Gastrocnemius medialis (tissue), 4 donors: ENCODE measurements at regions of chr9 and their contacts with region 1.

Region 1: DNA sequence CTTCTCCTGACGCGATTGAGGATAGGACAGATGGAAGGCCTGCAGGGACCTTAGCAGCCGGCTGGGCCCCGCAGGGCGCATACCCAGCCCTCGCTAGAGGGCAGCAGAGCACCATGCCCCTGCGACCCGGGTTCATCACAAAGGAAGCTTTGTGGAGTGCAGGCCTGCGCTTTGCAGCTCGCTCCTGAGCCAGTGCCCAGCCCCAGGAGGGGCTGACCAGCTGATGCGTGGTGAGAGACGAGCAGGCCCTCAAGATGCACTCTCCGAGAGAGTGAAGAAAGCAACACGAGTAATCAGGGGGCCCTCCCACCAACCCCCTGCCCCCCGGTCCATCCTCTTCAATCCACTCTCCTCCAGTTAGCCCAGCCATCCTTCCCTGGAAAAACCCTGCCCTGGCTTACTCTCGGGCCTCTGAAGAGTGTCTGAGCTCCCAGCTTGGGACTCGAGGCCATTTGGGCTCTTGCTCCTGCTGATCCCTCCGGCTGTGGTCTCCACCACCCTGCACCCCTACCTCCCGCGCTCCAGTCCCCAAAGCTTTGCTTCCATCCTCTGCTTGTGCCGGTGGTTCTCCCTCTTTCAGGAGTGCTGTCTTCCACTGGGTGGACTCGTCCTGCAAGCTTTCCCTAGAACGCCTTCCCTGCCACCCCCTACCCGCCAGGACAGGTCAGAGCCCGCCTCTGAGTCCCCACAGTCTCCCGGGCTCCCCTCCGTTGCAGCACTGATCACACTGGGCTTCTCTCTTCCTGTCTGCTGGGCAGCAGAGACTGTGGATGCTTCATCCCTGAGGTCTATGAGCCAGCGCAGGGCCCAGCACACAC is 9.1 kb upstream of the KIF12 start:
- DNase-seq: peak; percentile 42 to 48
- ATAC-seq: peak; percentile 85 to 89
- H3K4me3 ChIP-seq: no peak overlapping the region
- H3K27ac ChIP-seq: no peak overlapping the region
- H3K4me1 ChIP-seq: no peaks in the 10 kb centered on the region
- H3K27me3 ChIP-seq: no peaks in the 10 kb centered on the region
- CTCF ChIP-seq: peak; percentile 89 to 99 (median 94)
- POLR2A ChIP-seq: no peak

Region 2: GRCh38 chr9:113929634-113930389 is 178.4 kb before region 1 on chr9:
- in situ Hi-C with region 1: no loop called
- intact Hi-C with region 1: no loop called
- DNase-seq: no peak
- ATAC-seq: no peak
- H3K4me3 ChIP-seq: no peak overlapping the region
- H3K27ac ChIP-seq: no peak overlapping the region
- H3K4me1 ChIP-seq: peaks cover 0 to 7% of the 10 kb centered on the region in 2 donors
- H3K27me3 ChIP-seq: no peaks in the 10 kb centered on the region
- CTCF ChIP-seq: no peak
- POLR2A ChIP-seq: no peak

Region 3: GRCh38 chr9:114082017-114082762 is 26.0 kb before region 1 on chr9:
- in situ Hi-C with region 1: no loop called
- intact Hi-C with region 1: loop called (anchors 1 kb)
- DNase-seq: peak; percentile 62 to 79
- ATAC-seq: peak; percentile 95 to 98
- H3K4me3 ChIP-seq: no peak overlapping the region
- H3K27ac ChIP-seq: no peak overlapping the region
- H3K4me1 ChIP-seq: no peaks in the 10 kb centered on the region
- H3K27me3 ChIP-seq: peaks cover 0 to 6% (median 0%) of the 10 kb centered on the region in 3 donors
- CTCF ChIP-seq: peak; percentile 72 to 94 (median 89)
- POLR2A ChIP-seq: no peak

Region 4: DNA sequence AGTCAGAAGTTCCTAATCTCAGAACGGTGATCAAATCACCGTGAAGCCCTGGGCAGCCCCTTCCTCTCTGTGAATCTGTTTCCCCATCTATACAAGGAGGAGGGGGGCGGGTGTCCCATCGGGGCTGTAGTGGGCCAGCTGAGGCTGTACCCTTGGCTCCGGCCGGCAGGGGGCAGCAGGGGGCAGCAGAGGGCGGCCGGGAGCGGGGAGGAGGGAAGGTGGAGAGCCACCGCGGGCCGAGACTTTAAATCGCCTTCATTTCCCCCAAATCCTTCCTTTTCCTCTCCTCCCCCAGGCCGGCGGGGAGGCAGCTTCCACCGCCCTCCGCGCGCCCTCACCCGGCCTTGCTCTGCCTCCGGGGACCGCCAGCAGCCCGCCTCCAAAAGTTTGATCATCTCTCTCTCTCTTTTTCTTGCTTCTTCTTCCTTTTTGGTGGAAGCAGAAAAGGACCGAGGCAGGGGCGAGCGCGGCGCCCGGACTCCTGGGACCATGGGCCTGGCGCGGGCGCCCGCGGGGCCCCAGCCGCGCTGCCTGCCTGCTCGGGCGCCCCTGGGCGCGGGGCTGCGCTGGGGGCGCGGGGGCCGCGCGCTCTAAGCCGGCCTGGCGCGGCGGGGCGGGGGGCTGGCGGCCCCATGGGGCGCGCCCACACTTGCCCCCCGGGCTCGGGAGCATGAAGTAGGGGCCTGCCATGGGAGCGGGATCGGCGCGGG is 47.2 kb after region 1 on chr9 and contains the start of gene COL27A1:
- in situ Hi-C with region 1: no loop called
- intact Hi-C with region 1: loop called (anchors 2 kb)
- DNase-seq: peak; percentile 53 to 73
- ATAC-seq: peak; percentile 83
- H3K4me3 ChIP-seq: peak within 1 kb of the TSS; percentile 57 to 68 (median 62)
- H3K27ac ChIP-seq: peak within 1 kb of the TSS; percentile 56 to 71 (median 64)
- H3K4me1 ChIP-seq: peaks cover 4 to 16% of the 10 kb centered on the region in 2 donors
- H3K27me3 ChIP-seq: peaks cover 12 to 17% (median 14%) of the 10 kb centered on the region in 3 donors
- CTCF ChIP-seq: peak; percentile 87 to 98 (median 96)
- POLR2A ChIP-seq: no peak
- total RNA-seq, gene COL27A1: 0.42 to 1.4 (median 0.95) TPM

Region 5: GRCh38 chr9:114271641-114272081 is 163.4 kb after region 1 on chr9:
- in situ Hi-C with region 1: no loop called
- intact Hi-C with region 1: loop called (anchors 1 kb)
- DNase-seq: peak; percentile 27 to 57
- ATAC-seq: peak; percentile 70 to 82
- H3K4me3 ChIP-seq: no peak overlapping the region
- H3K27ac ChIP-seq: no peak overlapping the region
- H3K4me1 ChIP-seq: peaks cover under 1 to 2% of the 10 kb centered on the region in 2 donors
- H3K27me3 ChIP-seq: no peaks in the 10 kb centered on the region
- CTCF ChIP-seq: peak; percentile 47 to 74 (median 63)
- POLR2A ChIP-seq: no peak

Region 6: GRCh38 chr9:114282926-114283325 is 174.7 kb after region 1 on chr9:
- in situ Hi-C with region 1: loop called in 2 of 4 experiments (anchors 5 to 10 kb)
- intact Hi-C with region 1: no loop called
- DNase-seq: no peak
- ATAC-seq: no peak
- H3K4me3 ChIP-seq: no peak overlapping the region
- H3K27ac ChIP-seq: no peak overlapping the region
- H3K4me1 ChIP-seq: no peaks in the 10 kb centered on the region
- H3K27me3 ChIP-seq: no peaks in the 10 kb centered on the region
- CTCF ChIP-seq: no peak
- POLR2A ChIP-seq: no peak

Region 7: DNA sequence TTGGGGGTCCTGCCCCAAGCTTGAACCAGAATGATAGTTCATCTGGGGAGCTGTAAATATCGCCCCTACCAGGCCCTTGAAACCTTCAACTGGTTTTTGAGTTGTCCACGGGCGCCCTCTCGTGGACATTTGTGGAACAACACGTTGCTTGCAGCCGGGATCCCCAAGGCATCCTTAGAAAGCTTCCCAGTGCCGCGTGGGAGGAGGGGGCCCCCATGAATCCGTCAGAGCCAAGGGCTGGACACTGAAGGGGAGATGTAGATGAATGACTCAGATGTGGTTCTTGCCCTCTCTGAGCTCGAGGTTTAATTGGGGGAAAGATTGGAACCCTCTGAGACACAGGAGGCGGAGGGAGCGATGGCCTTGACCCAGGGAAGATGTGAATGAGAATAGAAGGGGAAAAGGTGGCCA is 182.8 kb after region 1 on chr9:
- in situ Hi-C with region 1: loop called (anchors 5 to 10 kb)
- intact Hi-C with region 1: loop called (anchors 1 kb)
- DNase-seq: peak; percentile 31 to 56
- ATAC-seq: peak; percentile 69 to 75
- H3K4me3 ChIP-seq: no peak overlapping the region
- H3K27ac ChIP-seq: no peak overlapping the region
- H3K4me1 ChIP-seq: no peaks in the 10 kb centered on the region
- H3K27me3 ChIP-seq: no peaks in the 10 kb centered on the region
- CTCF ChIP-seq: peak; percentile 84 to 96 (median 93)
- POLR2A ChIP-seq: no peak